Activated CD4-positive, alpha-beta memory T cell treated with anti-CD3 and anti-CD28 coated beads for 36 hours (primary cell): ENCODE measurements at regions of chrX and their contacts with region 1.

Region 1: GRCh38 chrX:118345401-118346257 is at the start of gene WDR44:
- DNase-seq: peak; percentile 96
- H3K4me3 Mint-ChIP-seq: peak within 1 kb of the TSS; percentile 96
- H3K27ac Mint-ChIP-seq: peak within 1 kb of the TSS; percentile 98
- H3K4me1 Mint-ChIP-seq: peaks cover 32% of the 10 kb centered on the region
- H3K27me3 Mint-ChIP-seq: no peaks in the 10 kb centered on the region
- total RNA-seq, gene WDR44: 8.2 to 9.2 TPM

Region 2: GRCh38 chrX:118420462-118420861 is 74.8 kb after region 1 on chrX:
- CTCF ChIA-PET with region 1: no interaction called
- POLR2A ChIA-PET with region 1: no interaction called
- intact Hi-C with region 1: loop called (anchors 5 kb)
- DNase-seq: no peak
- H3K4me3 Mint-ChIP-seq: no peak overlapping the region
- H3K27ac Mint-ChIP-seq: no peak overlapping the region
- H3K4me1 Mint-ChIP-seq: peaks cover 14% of the 10 kb centered on the region
- H3K27me3 Mint-ChIP-seq: no peaks in the 10 kb centered on the region

Region 3: DNA sequence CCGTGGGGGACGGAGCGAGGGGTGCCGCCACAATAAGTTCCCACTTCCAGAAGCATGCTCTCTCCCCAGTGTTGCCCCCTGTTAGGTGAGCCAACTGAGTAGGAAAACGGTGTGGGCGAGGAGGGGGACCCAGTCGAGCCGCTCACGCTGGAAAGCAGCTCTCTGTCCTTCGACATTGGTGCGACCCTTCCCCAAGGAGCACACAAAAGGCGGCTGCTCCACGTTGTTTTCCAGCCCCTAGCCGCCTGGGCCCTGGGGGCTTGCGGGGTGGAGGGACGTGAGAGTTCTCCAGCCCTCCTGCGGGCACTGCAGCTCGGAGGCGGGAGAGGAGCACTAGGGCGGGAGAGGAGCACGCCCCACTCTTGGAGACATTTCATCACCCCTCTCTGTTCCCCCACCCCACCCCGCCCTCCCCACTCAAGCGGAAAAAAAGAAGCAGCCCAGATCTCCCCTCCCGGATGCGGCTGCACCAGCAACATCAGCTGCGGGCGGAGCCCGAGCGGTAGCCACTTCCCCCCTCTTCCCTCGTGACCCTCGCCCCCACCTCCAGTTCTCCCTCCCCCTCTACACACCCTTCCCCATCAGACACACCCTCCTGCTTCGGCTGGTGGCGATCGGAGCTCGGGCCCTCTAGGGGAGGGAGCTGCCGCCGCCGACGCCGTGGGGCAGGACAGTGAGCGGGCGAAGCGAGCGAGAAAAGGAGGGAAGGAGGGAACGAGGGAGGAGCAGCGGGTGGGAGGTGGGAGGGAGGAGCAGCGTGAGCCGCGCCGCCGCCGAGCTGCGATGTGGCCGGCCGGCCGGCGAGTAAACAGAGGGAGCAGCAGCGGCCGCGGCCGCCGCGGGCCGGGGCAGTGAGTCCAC is 149.7 kb after region 1 on chrX and contains the start of gene DOCK11:
- CTCF ChIA-PET with region 1: no interaction called
- POLR2A ChIA-PET with region 1: interaction called, 4 read pairs
- intact Hi-C with region 1: loop called (anchors 2 kb)
- DNase-seq: peak; percentile 90
- H3K4me3 Mint-ChIP-seq: peak within 1 kb of the TSS; percentile 99
- H3K27ac Mint-ChIP-seq: peak within 1 kb of the TSS; percentile 97
- H3K4me1 Mint-ChIP-seq: peaks cover 24% of the 10 kb centered on the region
- H3K27me3 Mint-ChIP-seq: no peaks in the 10 kb centered on the region
- total RNA-seq, gene DOCK11: 47.5 to 50.4 TPM

Region 4: DNA sequence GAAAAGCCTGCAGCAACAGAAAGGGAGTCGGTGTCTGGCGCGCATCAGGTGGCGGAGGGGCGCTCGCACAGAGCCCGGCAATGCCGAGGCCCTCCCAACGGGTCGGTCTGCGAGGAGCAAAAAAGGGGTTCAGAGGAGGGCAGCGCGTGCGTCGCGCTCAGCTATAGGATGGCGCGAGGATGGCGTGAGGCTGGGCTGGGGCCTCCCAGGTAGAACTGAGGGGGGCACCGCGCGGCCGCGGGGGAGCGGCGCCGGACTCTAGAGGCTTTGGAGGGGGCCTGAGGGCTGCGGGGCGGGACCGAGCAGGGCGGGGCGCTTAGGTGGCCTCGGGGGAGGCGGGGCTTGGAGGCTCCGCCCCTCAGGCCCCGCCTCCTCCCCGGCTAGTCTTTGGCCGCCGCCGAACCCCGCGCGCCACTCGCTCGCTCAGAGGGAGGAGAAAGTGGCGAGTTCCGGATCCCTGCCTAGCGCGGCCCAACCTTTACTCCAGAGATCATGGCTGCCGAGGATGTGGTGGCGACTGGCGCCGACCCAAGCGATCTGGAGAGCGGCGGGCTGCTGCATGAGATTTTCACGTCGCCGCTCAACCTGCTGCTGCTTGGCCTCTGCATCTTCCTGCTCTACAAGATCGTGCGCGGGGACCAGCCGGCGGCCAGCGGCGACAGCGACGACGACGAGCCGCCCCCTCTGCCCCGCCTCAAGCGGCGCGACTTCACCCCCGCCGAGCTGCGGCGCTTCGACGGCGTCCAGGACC is 890.4 kb after region 1 on chrX and contains the start of gene PGRMC1:
- CTCF ChIA-PET with region 1: no interaction called
- POLR2A ChIA-PET with region 1: no interaction called
- intact Hi-C with region 1: loop called (anchors 10 kb)
- DNase-seq: peak; percentile 83
- H3K4me3 Mint-ChIP-seq: peak within 1 kb of the TSS; percentile 80
- H3K27ac Mint-ChIP-seq: peak within 1 kb of the TSS; percentile 79
- H3K4me1 Mint-ChIP-seq: peaks cover 24% of the 10 kb centered on the region
- H3K27me3 Mint-ChIP-seq: peaks cover 2% of the 10 kb centered on the region
- total RNA-seq, gene PGRMC1: 29.0 to 29.4 TPM